CD4-positive, alpha-beta memory T cell (primary cell): ENCODE measurements at regions of chr1 and their contacts with region 1.

Region 1: DNA sequence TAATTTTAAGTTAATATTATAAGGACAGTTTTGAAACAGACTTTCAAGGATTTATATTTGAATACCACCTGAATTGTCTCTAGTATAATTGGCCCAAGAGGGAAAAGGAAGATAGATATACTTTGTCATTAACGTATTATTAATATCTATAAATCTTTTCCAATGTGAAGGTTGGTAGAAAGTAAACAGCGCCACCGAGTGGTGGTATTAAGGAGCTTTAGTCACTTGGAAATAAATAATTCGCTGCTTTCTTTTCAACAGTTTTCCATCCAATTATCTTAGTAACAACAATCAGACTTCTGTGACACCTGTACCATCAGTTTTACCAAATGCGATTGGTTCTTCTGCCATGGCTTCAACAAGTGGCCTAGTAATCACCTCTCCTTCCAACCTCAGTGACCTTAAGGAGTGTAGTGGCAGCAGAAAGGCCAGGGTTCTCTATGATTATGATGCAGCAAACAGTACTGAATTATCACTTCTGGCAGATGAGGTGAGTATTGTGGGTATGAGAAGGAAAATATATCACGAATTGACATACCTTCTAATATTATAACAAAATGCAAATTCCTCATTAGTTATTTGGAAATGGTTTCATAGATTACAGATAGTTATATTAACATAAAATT is 37.7 kb downstream of the SH3GLB1 start:
- DNase-seq: peak; percentile 11 to 55 (median 40)
- H3K4me3 ChIP-seq: no peak overlapping the region
- H3K4me3 Mint-ChIP-seq: no peak overlapping the region
- H3K27ac ChIP-seq: no peak overlapping the region
- H3K27ac Mint-ChIP-seq: no peak overlapping the region
- H3K4me1 ChIP-seq: peaks cover 24% of the 10 kb centered on the region
- H3K4me1 Mint-ChIP-seq: peaks cover 2 to 4% (median 4%) of the 10 kb centered on the region in 4 donors
- H3K27me3 ChIP-seq: no peaks in the 10 kb centered on the region
- H3K27me3 Mint-ChIP-seq: no peaks in the 10 kb centered on the region

Region 2: GRCh38 chr1:86515597-86515996 is 226.5 kb before region 1 on chr1:
- CTCF ChIA-PET with region 1: no interaction called
- POLR2A ChIA-PET with region 1: no interaction called
- intact Hi-C with region 1: no loop called
- DNase-seq: no peak
- H3K4me3 ChIP-seq: no peak overlapping the region
- H3K4me3 Mint-ChIP-seq: no peak overlapping the region
- H3K27ac ChIP-seq: no peak overlapping the region
- H3K27ac Mint-ChIP-seq: no peak overlapping the region
- H3K4me1 ChIP-seq: no peaks in the 10 kb centered on the region
- H3K4me1 Mint-ChIP-seq: no peaks in the 10 kb centered on the region
- H3K27me3 ChIP-seq: no peaks in the 10 kb centered on the region
- H3K27me3 Mint-ChIP-seq: no peaks in the 10 kb centered on the region

Region 3: GRCh38 chr1:86753700-86754099 is 11.6 kb after region 1 on chr1:
- CTCF ChIA-PET with region 1: interaction called, 10 read pairs
- POLR2A ChIA-PET with region 1: no interaction called
- intact Hi-C with region 1: no loop called
- DNase-seq: peak in 1 of 5 donors; percentile 10
- H3K4me3 ChIP-seq: no peak overlapping the region
- H3K4me3 Mint-ChIP-seq: no peak overlapping the region
- H3K27ac ChIP-seq: no peak overlapping the region
- H3K27ac Mint-ChIP-seq: no peak overlapping the region
- H3K4me1 ChIP-seq: no peaks in the 10 kb centered on the region
- H3K4me1 Mint-ChIP-seq: peaks cover 0 to 4% (median 0%) of the 10 kb centered on the region in 4 donors
- H3K27me3 ChIP-seq: no peaks in the 10 kb centered on the region
- H3K27me3 Mint-ChIP-seq: peaks cover 10 to 12% of the 10 kb centered on the region in 2 donors

Region 4: GRCh38 chr1:86887479-86888162 is 145.6 kb after region 1 on chr1:
- CTCF ChIA-PET with region 1: no interaction called
- POLR2A ChIA-PET with region 1: no interaction called
- intact Hi-C with region 1: no loop called
- DNase-seq: no peak
- H3K4me3 ChIP-seq: no peak overlapping the region
- H3K4me3 Mint-ChIP-seq: no peak overlapping the region
- H3K27ac ChIP-seq: no peak overlapping the region
- H3K27ac Mint-ChIP-seq: peak overlapping the region in 2 of 7 donors; percentile 32 to 36
- H3K4me1 ChIP-seq: peaks cover 8% of the 10 kb centered on the region
- H3K4me1 Mint-ChIP-seq: peaks cover 18 to 33% (median 25%) of the 10 kb centered on the region in 4 donors
- H3K27me3 ChIP-seq: no peaks in the 10 kb centered on the region
- H3K27me3 Mint-ChIP-seq: no peaks in the 10 kb centered on the region

Region 5: GRCh38 chr1:87084244-87084836 is 342.3 kb after region 1 on chr1:
- CTCF ChIA-PET with region 1: interaction called, 3 read pairs
- POLR2A ChIA-PET with region 1: no interaction called
- intact Hi-C with region 1: loop called (anchors 5 kb)
- DNase-seq: peak in 4 of 5 donors; percentile 43 to 46 (median 44)
- H3K4me3 ChIP-seq: no peak overlapping the region
- H3K4me3 Mint-ChIP-seq: no peak overlapping the region
- H3K27ac ChIP-seq: no peak overlapping the region
- H3K27ac Mint-ChIP-seq: no peak overlapping the region
- H3K4me1 ChIP-seq: no peaks in the 10 kb centered on the region
- H3K4me1 Mint-ChIP-seq: peaks cover 0 to 3% (median 1%) of the 10 kb centered on the region in 4 donors
- H3K27me3 ChIP-seq: no peaks in the 10 kb centered on the region
- H3K27me3 Mint-ChIP-seq: no peaks in the 10 kb centered on the region